ENCODE measurements at regions of chr7 and their contacts with region 1.

Region 1: DNA sequence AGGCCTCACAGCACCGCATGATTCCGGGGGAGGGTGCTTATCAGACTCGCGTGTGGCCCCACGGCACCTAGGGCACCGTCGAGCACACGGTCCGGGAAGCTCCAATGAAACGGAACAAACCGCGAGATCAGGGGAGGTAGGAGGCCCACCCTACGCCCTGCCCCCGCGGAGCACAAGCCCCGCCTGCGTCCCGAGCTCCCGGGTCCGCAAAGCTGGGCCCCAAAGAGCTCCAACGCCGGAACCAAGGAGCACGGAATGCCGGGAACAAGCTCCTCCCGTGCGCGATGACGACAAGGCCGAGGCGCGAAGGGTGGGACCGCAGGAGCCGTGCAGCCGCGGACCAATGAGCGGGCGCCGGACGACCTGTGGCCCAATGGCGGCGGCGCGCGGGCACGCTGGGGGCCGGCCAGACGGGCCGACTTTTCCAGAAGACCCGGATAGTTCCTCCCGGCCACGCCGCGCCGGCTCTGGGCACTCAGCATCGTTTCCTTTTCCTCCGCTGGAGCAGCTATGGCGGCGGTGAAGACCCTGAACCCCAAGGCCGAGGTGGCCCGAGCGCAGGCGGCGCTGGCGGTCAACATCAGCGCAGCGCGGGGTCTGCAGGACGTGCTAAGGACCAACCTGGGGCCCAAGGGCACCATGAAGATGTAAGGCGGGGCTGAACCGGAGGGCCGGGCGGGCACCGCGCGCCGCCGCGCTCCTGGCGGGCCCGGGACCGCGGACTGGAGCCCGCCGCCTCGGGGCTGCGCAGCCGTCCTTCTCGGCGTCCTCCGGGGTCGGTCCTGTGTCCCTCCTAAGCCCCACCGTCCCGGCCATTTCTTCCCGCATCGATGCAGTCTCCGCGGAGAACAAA is at the starts of genes CCT6A and PSPH:
- DNase-seq: peak; percentile 94
- H3K4me3 Mint-ChIP-seq: peak within 1 kb of the TSS; percentile 95
- H3K27ac Mint-ChIP-seq: peak within 1 kb of the TSS; percentile 95
- H3K4me1 Mint-ChIP-seq: peaks cover 48% of the 10 kb centered on the region
- H3K27me3 Mint-ChIP-seq: no peaks in the 10 kb centered on the region
- total RNA-seq, gene CCT6A: 225 to 231 TPM
- total RNA-seq, gene PSPH: 15.7 to 18.6 TPM

Region 2: DNA sequence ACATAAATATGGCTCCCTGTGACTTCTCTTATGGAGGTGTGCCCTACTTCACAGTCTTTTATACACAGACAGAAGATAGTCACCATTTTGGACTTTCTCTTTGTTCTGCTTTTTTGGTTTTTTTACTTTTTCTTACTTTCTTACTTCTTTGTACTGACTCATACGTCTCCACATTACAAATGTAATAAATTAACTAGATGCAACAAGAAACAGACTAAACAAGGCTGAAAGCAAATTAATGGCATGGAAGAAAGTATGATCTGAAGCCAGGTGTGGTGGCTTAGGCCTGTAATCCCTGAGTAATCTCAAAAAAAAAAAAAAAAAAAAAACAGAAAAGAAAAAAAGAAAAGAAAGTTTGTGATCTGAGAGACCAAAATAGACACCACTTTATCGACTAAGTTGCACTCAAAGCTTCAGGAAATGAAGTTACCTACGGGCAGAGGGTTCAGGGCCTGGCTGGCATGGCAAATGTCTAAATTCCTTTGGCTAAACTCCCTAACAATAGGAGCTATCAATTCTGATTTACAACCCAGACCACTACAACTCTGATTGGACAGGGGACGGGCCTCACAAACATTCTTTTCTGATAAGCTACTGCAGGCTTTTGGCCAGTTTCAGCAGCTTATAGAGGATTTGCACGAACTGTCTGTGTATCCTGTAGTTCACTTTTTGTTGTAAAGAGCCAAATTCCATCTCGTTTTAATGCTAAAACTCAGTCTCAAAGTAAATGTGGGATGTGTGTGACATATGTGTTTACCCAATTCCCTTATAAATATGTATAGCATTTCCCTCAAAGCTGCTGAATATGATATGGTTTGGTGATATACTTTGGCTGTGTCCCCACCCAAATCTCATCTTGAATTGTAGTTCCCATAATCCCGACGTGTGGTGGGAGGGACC is 318.1 kb before region 1 on chr7:
- CTCF ChIA-PET with region 1: no interaction called
- intact Hi-C with region 1: no loop called
- DNase-seq: no peak
- H3K4me3 Mint-ChIP-seq: no peak overlapping the region
- H3K27ac Mint-ChIP-seq: no peak overlapping the region
- H3K4me1 Mint-ChIP-seq: no peaks in the 10 kb centered on the region
- H3K27me3 Mint-ChIP-seq: no peaks in the 10 kb centered on the region

Region 3: DNA sequence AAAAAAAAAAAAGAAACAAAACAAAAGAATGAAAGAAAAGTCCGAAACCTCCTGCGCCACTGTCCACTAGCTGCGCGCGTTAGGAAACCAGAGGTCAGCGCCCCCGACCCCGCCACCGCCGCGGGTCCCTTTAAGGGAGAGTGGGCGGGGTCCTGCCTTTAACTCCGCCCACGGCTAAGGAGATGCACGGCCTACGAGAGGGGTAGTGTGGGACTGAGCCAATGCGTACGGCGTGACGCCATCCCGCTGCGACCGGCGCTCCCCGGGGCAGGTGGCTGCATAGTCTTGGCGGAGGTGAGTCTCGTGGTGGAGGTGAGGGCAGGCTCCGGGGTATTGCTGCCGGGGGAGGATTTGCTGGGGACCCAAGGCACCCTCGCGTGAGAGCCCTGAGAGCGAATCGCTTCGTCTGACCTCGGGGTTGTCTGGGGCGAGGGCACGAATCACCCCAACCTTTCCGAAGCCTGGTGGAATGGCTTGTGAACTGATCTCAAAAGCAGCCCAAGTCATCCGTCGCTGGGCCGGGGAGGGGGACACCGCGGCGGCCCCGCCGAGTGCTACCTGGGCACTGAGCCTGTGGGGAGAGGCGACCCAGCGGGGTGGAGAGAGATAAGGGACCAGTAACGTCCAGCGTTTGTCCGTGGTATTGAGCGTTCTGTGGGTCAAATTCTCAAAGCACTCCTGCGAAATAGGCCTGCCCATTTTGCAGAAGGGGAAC is 99.8 kb before region 1 on chr7 and contains the start of gene MRPS17:
- CTCF ChIA-PET with region 1: no interaction called
- intact Hi-C with region 1: loop called (anchors 1 kb)
- DNase-seq: peak; percentile 96
- H3K4me3 Mint-ChIP-seq: peak within 1 kb of the TSS; percentile 99
- H3K27ac Mint-ChIP-seq: peak within 1 kb of the TSS; percentile 94
- H3K4me1 Mint-ChIP-seq: peaks cover 28% of the 10 kb centered on the region
- H3K27me3 Mint-ChIP-seq: peaks cover 2% of the 10 kb centered on the region
- total RNA-seq, gene MRPS17: 17.3 to 18.7 TPM

Region 4: GRCh38 chr7:55996856-55997500 is 54.6 kb before region 1 on chr7:
- CTCF ChIA-PET with region 1: no interaction called
- intact Hi-C with region 1: loop called (anchors 2 kb)
- DNase-seq: no peak
- H3K4me3 Mint-ChIP-seq: no peak overlapping the region
- H3K27ac Mint-ChIP-seq: no peak overlapping the region
- H3K4me1 Mint-ChIP-seq: peaks cover 13% of the 10 kb centered on the region
- H3K27me3 Mint-ChIP-seq: no peaks in the 10 kb centered on the region

Region 5: GRCh38 chr7:56063882-56064625 is 12.5 kb after region 1 on chr7 and contains the start of gene SUMF2:
- CTCF ChIA-PET with region 1: interaction called, 4 read pairs
- intact Hi-C with region 1: loop called (anchors 1 kb)
- DNase-seq: peak; percentile 90
- H3K4me3 Mint-ChIP-seq: peak within 1 kb of the TSS; percentile 88
- H3K27ac Mint-ChIP-seq: peak within 1 kb of the TSS; percentile 91
- H3K4me1 Mint-ChIP-seq: peaks cover 41% of the 10 kb centered on the region
- H3K27me3 Mint-ChIP-seq: no peaks in the 10 kb centered on the region
- total RNA-seq, gene SUMF2: 143 to 159 TPM

Region 6: DNA sequence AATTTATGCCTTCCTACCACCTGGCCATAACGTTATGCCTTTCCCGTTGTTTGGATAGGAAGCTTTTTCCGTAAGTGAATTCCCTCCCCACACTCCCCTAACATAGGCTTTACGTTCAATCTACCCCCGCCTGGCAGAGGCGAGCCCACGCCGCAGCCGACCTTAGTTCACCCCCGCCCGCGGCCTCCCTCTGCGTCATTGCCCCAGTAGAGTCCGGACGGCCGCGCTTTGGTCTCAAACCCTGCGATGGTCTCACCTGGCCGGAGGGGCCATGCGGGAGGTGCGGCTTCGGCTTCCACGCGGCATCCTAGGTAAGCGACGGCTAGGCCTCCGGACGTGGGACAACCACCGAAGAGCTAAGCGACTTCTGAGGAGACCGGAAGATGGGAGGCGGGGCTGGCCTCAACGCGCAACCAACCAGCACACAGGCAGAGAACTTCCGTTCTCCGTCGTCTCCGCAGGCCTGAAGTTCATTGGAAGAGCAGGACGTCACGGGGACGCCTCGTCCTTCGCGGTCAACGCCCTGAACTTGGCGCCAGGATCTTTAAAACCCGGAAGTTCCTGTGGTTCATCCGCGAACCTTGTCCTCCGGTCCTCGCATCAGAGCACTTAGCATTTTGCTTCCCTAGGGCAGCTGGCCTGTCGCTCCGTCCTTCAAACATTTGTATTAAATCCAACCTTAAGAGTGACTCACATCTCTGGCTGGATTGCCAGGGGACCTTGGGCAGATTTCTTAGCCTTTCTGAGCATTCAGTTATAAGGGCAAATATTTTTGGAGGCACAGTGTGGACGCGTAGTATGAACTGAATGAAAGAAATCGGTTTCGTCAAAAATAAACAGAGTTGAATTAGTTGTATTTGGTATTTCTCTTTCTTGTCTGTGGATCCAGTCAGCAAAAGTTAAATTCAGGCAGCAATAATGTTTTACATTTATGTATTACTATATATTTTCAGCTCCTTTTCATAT is 54.8 kb after region 1 on chr7 and contains the start of gene CHCHD2:
- CTCF ChIA-PET with region 1: no interaction called
- intact Hi-C with region 1: loop called (anchors 1 kb)
- DNase-seq: peak; percentile 97
- H3K4me3 Mint-ChIP-seq: peak within 1 kb of the TSS; percentile 90
- H3K27ac Mint-ChIP-seq: peak within 1 kb of the TSS; percentile 98
- H3K4me1 Mint-ChIP-seq: peaks cover 31% of the 10 kb centered on the region
- H3K27me3 Mint-ChIP-seq: no peaks in the 10 kb centered on the region
- total RNA-seq, gene CHCHD2: 793 TPM